Heart right ventricle (tissue), 16 donors: ENCODE measurements at regions of chr12 and their contacts with region 1.

Region 1: DNA sequence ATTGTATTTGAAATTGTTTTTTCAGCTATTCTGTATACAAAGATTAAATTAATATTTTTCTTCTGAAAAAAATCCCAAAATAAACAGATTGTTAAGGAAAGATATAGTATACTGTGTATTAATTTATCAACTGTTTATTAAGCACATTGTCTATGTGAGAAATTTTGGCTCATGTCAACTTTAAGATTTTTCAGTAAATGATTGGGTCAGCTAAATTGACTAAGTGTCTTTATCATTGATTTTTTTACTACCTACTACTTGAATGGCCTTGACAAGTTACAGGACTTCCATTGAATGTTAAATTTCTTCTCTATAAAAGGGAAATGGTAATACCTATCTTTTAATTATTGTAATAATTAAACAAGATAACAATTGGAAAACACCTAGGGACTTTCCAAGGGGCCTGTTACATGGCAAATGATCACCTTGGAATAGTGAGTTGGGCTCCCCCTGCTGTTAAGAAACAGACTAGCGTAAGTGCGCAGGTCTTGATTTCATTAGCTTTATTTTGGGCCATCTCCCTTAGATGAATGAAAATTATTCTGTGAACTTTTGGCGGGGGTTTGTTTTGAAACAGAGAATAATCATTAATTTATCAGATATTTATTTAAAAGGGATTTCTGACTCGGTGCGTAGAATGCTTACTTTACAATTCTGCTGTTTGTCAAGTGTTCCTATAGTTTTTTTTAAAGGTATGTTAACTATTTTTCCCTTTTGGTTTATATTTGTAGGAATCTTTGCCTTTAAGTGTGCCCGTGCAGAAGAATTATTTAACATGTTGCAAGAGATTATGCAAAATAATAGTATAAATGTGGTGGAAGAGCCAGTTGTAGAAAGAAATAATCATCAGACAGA is 14.5 kb upstream of the CCT2 start:
- DNase-seq: peak in 1 of 2 donors; percentile 56
- ATAC-seq: peak in 7 of 8 donors; percentile 49 to 77 (median 65)
- H3K4me3 ChIP-seq: no peak overlapping the region
- H3K27ac ChIP-seq: no peak overlapping the region
- H3K4me1 ChIP-seq: peaks cover 0 to 9% (median 0%) of the 10 kb centered on the region in 9 donors
- H3K27me3 ChIP-seq: no peaks in the 10 kb centered on the region
- CTCF ChIP-seq: peak; percentile 59 to 92 (median 81)

Region 2: DNA sequence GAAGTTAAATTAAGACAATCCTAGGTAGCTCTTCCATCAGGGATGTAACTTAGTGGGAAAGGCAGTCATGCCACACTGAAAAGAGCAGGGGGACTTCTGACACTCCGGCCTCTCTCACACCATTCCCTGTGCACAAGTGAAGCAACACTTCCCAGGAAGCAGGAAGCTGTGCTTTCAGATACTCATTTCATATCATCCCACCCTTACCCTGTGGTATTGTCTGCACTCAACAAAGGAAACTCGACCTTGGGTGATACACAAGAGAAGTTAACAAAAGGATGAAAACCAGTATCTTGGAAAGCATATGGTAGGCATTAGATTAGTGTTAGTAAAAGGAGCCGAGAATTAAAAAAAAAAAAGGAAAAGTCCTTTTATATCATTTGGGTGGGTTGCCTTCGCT is 1177.4 kb before region 1 on chr12:
- intact Hi-C with region 1: no loop called
- DNase-seq: no peak
- ATAC-seq: no peak
- H3K4me3 ChIP-seq: no peak overlapping the region
- H3K27ac ChIP-seq: no peak overlapping the region
- H3K4me1 ChIP-seq: peaks cover 0 to 5% (median 0%) of the 10 kb centered on the region in 9 donors
- H3K27me3 ChIP-seq: no peaks in the 10 kb centered on the region
- CTCF ChIP-seq: no peak

Region 3: DNA sequence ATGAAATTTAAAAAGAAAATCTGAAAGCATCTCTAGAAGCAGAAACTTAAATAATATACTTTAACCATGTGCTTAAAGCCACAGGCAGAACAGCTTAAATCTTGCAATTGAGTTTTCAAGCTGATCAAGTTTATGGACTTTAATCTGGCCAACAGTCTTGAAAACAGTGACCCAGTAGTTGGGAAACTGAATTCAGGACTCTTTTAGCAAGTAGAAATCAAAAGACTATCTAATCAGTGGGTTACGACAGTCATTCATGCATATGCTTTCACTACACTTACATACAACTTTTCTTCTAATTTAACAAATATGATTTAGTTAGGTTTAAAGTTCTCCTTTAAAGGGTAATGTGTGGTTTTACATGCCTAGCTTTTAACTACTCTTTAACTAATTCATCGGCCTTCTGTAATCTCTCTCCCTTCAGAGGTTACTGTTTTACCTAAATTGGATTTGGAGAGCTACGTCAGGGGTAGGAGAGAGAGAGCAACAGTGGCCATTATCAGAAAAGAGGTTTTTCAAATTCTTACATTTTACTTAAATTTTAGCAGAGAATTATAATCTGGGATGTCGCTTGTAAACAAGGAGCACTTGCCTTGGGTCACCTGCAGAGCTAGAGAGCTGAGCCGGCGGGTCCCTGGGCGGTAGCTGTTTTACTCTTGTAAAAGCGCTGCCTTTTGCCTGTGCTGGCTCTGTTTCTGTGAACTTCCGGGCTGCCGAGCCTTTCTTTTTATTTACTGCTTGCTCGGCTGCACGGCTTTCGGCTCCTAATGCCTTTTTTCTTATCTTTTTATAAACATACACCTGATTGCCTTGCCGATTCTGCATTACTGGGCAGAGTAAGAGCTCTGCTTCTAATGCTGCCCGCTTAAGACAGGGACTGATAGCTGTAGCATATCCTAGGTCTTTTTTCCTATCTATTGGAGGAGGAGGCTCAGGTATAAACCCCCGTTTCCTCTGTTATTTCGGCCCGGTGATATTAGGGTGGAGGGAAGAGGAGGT is 240.0 kb before region 1 on chr12:
- intact Hi-C with region 1: no loop called
- DNase-seq: no peak
- ATAC-seq: peak in 7 of 8 donors; percentile 29 to 56 (median 50)
- H3K4me3 ChIP-seq: peak overlapping the region; percentile 10 to 61 (median 48)
- H3K27ac ChIP-seq: peak overlapping the region in 1 of 10 donors; percentile 87
- H3K4me1 ChIP-seq: peaks cover 0 to 32% (median 7%) of the 10 kb centered on the region in 9 donors
- H3K27me3 ChIP-seq: peaks cover 0 to 57% (median 7%) of the 10 kb centered on the region in 7 donors
- CTCF ChIP-seq: no peak

Region 4: GRCh38 chr12:69359531-69360347 is 211.0 kb before region 1 on chr12 and contains the start of gene YEATS4:
- intact Hi-C with region 1: loop called in 6 of 10 experiments (anchors 2 to 10 kb)
- DNase-seq: peak; percentile 82 to 87
- ATAC-seq: peak; percentile 97 to 99 (median 98)
- H3K4me3 ChIP-seq: peak within 1 kb of the TSS; percentile 71 to 100 (median 84)
- H3K27ac ChIP-seq: peak within 1 kb of the TSS; percentile 87 to 99 (median 95)
- H3K4me1 ChIP-seq: peaks cover 0 to 26% (median 12%) of the 10 kb centered on the region in 9 donors
- H3K27me3 ChIP-seq: no peaks in the 10 kb centered on the region
- CTCF ChIP-seq: no peak
- total RNA-seq, gene YEATS4: 7.4 to 13.1 (median 9.5) TPM

Region 5: DNA sequence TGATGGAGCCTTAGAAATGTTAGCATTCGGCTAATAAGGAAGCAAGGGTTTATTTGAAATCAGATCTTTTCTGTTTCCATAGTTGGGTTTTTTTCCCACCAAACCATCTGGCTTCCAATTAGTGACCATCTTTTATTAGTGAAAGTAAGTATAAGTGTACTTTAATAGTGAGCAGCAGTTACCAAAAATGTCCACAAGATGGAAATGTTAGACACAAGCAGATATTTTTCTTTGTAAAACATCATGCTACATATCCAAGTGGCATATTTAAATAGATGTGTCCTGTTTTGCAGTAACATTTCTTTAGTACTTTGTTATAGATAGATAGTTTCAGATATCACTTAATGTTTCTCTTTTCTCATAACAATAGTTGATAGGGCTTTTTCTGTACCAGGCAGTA is 182.4 kb before region 1 on chr12:
- intact Hi-C with region 1: loop called in 6 of 10 experiments (anchors 5 to 10 kb)
- DNase-seq: no peak
- ATAC-seq: peak in 1 of 8 donors; percentile 53
- H3K4me3 ChIP-seq: no peak overlapping the region
- H3K27ac ChIP-seq: no peak overlapping the region
- H3K4me1 ChIP-seq: no peaks in the 10 kb centered on the region
- H3K27me3 ChIP-seq: no peaks in the 10 kb centered on the region
- CTCF ChIP-seq: peak; percentile 44 to 69 (median 60)

Region 6: GRCh38 chr12:69415471-69416275 is 155.1 kb before region 1 on chr12:
- intact Hi-C with region 1: loop called in 8 of 10 experiments (anchors 1 to 10 kb)
- DNase-seq: peak; percentile 32 to 37
- ATAC-seq: peak; percentile 79 to 95 (median 83)
- H3K4me3 ChIP-seq: no peak overlapping the region
- H3K27ac ChIP-seq: no peak overlapping the region
- H3K4me1 ChIP-seq: peaks cover 3 to 12% (median 7%) of the 10 kb centered on the region in 9 donors
- H3K27me3 ChIP-seq: no peaks in the 10 kb centered on the region
- CTCF ChIP-seq: peak; percentile 43 to 77 (median 68)

Region 7: GRCh38 chr12:69470189-69471075 is 100.3 kb before region 1 on chr12 and contains the start of gene FRS2:
- intact Hi-C with region 1: loop called in 8 of 10 experiments (anchors 2 to 5 kb)
- DNase-seq: peak; percentile 92 to 93
- ATAC-seq: peak; percentile 99 to 100 (median 99)
- H3K4me3 ChIP-seq: peak within 1 kb of the TSS; percentile 74 to 98 (median 86)
- H3K27ac ChIP-seq: peak within 1 kb of the TSS; percentile 81 to 98 (median 92)
- H3K4me1 ChIP-seq: peaks cover 3 to 51% (median 44%) of the 10 kb centered on the region in 9 donors
- H3K27me3 ChIP-seq: no peaks in the 10 kb centered on the region
- CTCF ChIP-seq: peak in 8 of 9 donors; percentile 13 to 43 (median 27)
- total RNA-seq, gene FRS2: 18.2 to 26.0 (median 20.0) TPM

Region 8: GRCh38 chr12:70849265-70849960 is 1278.6 kb after region 1 on chr12:
- intact Hi-C with region 1: no loop called
- DNase-seq: no peak
- ATAC-seq: peak in 6 of 8 donors; percentile 25 to 76 (median 60)
- H3K4me3 ChIP-seq: no peak overlapping the region
- H3K27ac ChIP-seq: no peak overlapping the region
- H3K4me1 ChIP-seq: peaks cover 0 to 10% (median 0%) of the 10 kb centered on the region in 9 donors
- H3K27me3 ChIP-seq: no peaks in the 10 kb centered on the region
- CTCF ChIP-seq: peak in 7 of 9 donors; percentile 30 to 64 (median 46)